ENCODE measurements at regions of chr10 and their contacts with region 1.

Region 1: DNA sequence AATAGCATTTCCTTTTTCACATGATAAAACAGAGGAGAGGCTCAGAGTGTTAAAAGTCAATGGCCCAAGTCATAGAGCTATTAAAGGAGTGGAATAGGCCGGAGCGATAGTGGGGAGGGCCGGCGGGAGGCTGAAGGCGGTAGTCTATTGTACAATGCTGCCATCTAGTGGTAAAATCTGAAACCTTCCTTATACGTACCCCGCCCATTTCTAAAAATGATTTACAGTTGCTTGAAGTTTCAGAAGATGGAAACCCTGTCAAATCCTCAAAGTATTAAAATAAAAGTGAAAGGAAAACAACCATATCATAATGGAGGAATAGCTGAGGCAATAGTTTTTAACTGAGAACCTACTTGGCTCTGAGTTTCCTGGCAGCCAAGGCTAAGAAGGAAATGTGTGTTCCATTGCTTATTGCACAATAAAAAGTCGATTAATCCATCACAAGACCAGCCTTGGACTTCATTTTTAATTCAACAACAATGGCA is 209.1 kb downstream of the CCSER2 start:
- DNase-seq: no peak
- H3K4me3 ChIP-seq: no peak overlapping the region
- H3K27ac ChIP-seq: no peak overlapping the region
- H3K4me1 ChIP-seq: peaks cover 0 to 18% (median 15%) of the 10 kb centered on the region in 6 donors
- H3K27me3 ChIP-seq: peaks cover 0 to 48% (median 14%) of the 10 kb centered on the region in 7 donors
- CTCF ChIP-seq: peak; percentile 51 to 90 (median 83)
- POLR2A ChIP-seq: no peak

Region 2: DNA sequence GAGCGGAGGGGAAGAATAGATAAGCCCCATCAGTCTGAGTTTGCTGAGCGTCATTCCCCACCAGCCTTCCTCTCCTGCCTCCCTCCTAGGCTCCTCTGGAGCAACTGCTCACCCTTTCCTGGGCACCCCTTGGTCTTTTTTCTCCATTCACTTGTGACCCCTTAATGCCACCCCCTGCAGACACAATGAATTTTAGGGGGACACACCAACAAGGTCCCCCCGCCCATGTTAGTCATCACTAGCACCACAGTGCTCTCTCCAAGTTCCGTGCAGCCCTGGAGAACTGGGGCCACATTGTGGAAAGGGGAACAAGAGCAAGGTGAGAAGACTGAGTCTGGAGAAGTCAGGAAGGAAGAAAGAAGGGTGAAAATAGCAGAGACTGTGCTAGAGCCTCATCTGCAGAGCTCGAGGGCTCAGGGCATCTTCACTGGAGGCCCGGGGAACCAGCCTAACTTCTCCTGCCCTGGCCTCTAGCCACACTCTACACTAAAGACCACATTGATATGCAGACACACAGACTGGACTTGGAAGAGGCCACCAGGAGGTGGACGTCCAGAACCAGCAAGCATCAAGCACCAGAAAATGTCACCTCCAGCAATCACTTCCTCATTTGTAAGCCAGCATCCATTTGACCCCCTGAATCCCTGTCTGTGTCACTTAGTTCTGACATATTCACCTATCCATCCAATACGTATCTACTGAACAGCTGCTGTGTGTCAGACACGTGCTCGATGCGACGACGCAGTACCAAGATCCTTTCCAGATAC is 275.1 kb before region 1 on chr10:
- intact Hi-C with region 1: loop called (anchors 2 kb)
- DNase-seq: no peak
- H3K4me3 ChIP-seq: no peak overlapping the region
- H3K27ac ChIP-seq: no peak overlapping the region
- H3K4me1 ChIP-seq: peaks cover 0 to 5% (median 2%) of the 10 kb centered on the region in 6 donors
- H3K27me3 ChIP-seq: peaks cover 0 to 47% (median 2%) of the 10 kb centered on the region in 7 donors
- CTCF ChIP-seq: no peak
- POLR2A ChIP-seq: no peak

Region 3: DNA sequence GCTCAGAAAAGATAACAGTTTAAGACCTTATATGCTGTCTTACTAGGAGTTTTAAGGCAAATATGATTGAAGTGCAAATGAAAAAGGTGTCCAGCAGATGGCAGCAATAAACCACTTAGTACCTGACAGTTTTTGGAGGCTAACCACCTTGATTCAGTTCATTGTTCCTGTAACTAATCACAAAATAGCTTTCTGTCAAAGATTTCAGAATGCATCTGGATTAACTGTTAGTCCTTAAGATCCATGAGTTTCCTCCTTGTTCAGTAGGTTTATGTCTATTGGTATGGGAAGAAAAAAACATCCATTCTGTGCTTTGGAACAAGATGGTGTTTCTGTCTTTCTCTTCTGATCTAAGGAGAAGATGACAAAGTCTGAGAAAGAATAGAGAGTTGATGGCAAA is 162.5 kb before region 1 on chr10:
- intact Hi-C with region 1: loop called (anchors 2 kb)
- DNase-seq: no peak
- H3K4me3 ChIP-seq: no peak overlapping the region
- H3K27ac ChIP-seq: no peak overlapping the region
- H3K4me1 ChIP-seq: peaks cover 0 to 8% (median 0%) of the 10 kb centered on the region in 6 donors
- H3K27me3 ChIP-seq: no peaks in the 10 kb centered on the region
- CTCF ChIP-seq: peak in 10 of 11 experiments; percentile 17 to 71 (median 60)
- POLR2A ChIP-seq: no peak

Region 4: DNA sequence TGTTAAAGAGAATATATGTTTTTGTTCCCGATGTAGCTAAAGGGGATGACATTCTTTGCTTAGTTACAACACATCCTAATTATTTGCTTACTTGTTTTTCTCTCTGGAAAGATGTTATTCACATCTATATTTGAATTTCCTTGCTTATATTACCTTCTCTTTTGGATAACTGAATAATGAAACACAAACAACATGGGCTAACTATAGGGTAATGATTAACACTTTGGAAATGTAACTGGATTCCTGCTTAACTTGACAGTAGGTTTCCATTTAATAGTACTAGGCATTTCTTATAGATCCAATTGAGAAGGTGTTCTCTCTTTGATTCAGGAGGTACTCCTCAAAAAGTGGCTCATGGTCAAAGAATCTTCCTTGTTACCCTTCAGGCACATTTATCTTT is 68.0 kb before region 1 on chr10:
- intact Hi-C with region 1: no loop called
- DNase-seq: no peak
- H3K4me3 ChIP-seq: no peak overlapping the region
- H3K27ac ChIP-seq: no peak overlapping the region
- H3K4me1 ChIP-seq: no peaks in the 10 kb centered on the region
- H3K27me3 ChIP-seq: no peaks in the 10 kb centered on the region
- CTCF ChIP-seq: no peak
- POLR2A ChIP-seq: no peak

Region 5: DNA sequence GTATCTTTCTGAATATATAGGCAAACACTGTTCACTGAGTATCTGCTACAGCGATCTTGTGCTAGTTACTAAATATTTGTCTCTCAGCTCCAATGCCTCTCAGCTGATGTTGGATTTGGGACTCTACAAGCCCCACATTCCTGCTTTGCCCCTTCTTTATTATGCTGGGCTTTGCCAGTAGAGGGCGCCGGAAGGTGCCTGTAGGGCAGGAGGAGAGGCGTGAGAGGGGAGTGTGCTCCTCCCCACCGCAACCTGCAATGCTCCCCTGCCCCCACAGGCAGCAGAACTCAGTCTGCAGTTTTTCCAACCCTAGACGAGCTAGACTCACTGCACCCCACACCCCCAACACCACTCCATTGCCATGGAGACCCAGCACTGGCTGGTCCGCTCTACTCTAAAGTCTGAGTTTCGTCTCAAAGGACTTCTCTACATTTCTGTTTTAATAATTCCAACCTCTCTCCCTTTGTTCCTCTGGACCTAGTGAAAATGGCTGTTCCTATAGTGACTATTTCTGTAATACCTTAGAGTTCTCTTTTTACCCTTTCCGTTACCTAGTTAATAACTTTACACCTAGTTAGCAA is 128.5 kb after region 1 on chr10:
- intact Hi-C with region 1: no loop called
- DNase-seq: no peak
- H3K4me3 ChIP-seq: no peak overlapping the region
- H3K27ac ChIP-seq: no peak overlapping the region
- H3K4me1 ChIP-seq: no peaks in the 10 kb centered on the region
- H3K27me3 ChIP-seq: peaks cover 0 to 20% (median 0%) of the 10 kb centered on the region in 7 donors
- CTCF ChIP-seq: peak in 4 of 11 experiments; percentile 7 to 34 (median 26)
- POLR2A ChIP-seq: no peak

Region 6: DNA sequence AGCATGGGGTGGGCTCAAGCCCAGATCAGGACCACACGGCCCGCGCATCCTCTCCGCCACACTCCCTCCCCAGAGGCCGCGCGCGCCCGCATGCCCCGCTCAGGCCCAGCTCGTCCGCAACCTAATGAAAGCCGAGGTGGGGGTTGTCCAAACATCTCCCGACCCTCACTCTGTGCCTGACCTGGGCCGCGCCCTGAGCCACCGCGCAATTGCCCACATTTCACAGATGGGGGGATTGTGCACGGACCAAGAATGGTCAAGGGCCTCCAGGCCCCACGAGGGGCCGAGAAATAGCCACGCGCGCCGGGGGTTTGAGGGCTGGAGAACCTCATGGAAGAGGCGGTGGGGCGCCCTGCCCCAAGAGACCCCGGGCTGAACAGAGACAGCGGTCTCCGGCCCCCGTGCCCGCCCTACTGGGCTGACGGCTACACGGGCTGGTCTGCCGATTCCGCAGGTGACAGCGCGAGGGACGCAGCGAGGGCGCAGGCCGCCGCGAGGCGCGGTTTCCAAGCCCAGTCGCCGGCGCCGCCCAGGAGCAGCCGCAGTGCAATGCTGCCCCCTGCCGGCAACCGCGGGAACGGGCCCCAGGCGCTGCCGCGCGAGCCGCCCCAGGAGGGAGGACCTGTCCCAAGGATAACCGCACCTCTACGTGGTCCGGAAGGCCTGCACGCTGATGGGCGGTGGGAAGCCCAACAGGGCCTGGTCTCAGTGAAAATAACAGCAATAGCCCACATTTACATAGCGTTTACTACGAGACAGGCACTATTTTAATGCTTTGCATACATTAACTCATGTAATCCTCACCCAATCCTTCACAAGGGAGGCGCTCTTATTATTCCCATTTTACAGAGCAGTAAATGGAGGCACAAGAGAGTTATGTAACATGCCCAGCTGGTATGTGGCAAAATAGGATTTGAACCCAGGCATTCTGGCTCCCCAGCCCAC is 1839.6 kb after region 1 on chr10:
- intact Hi-C with region 1: loop called (anchors 5 kb)
- DNase-seq: peak; percentile 96
- H3K4me3 ChIP-seq: peak overlapping the region in 4 of 8 donors; percentile 16 to 57 (median 21)
- H3K27ac ChIP-seq: no peak overlapping the region
- H3K4me1 ChIP-seq: peaks cover 4 to 10% (median 8%) of the 10 kb centered on the region in 6 donors
- H3K27me3 ChIP-seq: peaks cover 3 to 76% (median 14%) of the 10 kb centered on the region in 7 donors
- CTCF ChIP-seq: peak; percentile 83 to 100 (median 97)
- POLR2A ChIP-seq: no peak